K562 (cell line): ENCODE measurements at regions of chr3 and their contacts with region 1.

Region 1: DNA sequence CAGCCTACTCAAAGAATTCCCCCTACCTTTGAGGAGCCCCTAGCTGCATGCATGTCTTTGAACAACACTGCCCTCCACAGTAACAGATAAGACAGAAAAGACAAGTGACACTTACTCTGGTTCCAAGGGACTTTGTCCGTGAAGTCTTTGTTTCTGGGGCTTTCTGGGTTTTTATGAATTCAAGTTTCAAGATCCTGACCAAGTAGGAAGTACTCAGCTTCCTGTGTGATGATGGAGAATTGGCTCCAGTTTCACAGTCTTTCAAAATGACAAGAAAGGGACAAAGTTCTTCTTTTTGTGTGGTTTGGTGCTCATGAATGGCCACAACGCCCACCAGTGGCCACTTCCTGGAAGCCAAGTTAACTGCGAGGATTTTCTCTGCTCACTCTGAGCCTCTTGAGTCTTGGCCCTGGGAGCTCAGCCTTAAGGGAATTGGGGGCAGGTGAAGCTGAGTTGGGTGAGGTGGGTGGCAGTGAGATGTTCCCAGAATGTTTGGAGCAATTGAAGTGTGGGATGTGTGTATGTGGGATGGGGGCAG is at the start of gene CCR1:
- DNase-seq: peak in 2 of 4 experiments; percentile 27 to 41
- ATAC-seq: peak; percentile 89
- H3K4me3 ChIP-seq: no peak within 1 kb of the TSS
- H3K27ac ChIP-seq: no peak within 1 kb of the TSS
- H3K4me1 ChIP-seq: no peaks in the 10 kb centered on the region
- H3K27me3 ChIP-seq: peaks cover 0 to 13% of the 10 kb centered on the region in 2 experiments; a peak in 3 of 5 replicates
- CTCF ChIP-seq: peak; percentile 73 to 81 (median 76)
- EP300 ChIP-seq: no peak
- POLR2A ChIP-seq: no peak
- RAD21 ChIP-seq: peak; percentile 73 to 75
- polyA plus RNA-seq, gene CCR1: not detected

Region 2: GRCh38 chr3:46089237-46090011 is 118.8 kb before region 1 on chr3:
- CTCF ChIA-PET with region 1: interaction called, 11 read pairs
- POLR2A ChIA-PET with region 1: no interaction called
- in situ Hi-C with region 1: no loop called
- intact Hi-C with region 1: loop called (anchors 10 kb)
- DNase-seq: no peak
- ATAC-seq: no peak; the same call in 2 of the 3 replicates
- H3K4me3 ChIP-seq: no peak overlapping the region
- H3K27ac ChIP-seq: no peak overlapping the region
- H3K4me1 ChIP-seq: no peaks in the 10 kb centered on the region; a peak in 1 of 5 replicates
- H3K27me3 ChIP-seq: peaks cover 0 to 13% of the 10 kb centered on the region in 2 experiments; a peak in 3 of 5 replicates
- CTCF ChIP-seq: no peak
- EP300 ChIP-seq: no peak
- POLR2A ChIP-seq: no peak
- RAD21 ChIP-seq: no peak

Region 3: DNA sequence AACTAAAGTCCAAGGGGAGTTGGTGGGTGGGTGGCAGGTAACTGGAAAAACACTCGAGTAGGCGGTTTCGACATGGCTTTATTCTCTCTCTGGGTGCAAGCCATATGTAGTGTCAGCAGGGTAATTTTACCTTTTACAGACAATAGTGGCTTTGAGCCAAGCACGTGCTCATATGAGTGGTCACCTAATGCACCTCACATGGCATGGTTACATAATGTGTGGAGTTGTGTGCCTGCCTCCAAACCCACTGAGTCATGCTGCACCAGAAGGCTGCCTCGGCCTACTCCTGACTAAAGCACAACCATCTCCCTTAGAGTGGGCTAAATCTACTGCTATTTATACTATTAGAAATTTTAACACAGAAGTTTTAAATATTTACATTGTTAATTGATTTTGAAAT is 215.4 kb after region 1 on chr3:
- CTCF ChIA-PET with region 1: no interaction called
- POLR2A ChIA-PET with region 1: no interaction called
- in situ Hi-C with region 1: no loop called
- intact Hi-C with region 1: no loop called
- DNase-seq: no peak
- ATAC-seq: no peak
- H3K4me3 ChIP-seq: no peak overlapping the region
- H3K27ac ChIP-seq: no peak overlapping the region
- H3K4me1 ChIP-seq: peaks cover 3 to 18% of the 10 kb centered on the region in 2 experiments; a peak in 4 of 5 replicates
- H3K27me3 ChIP-seq: peaks cover 0 to 4% of the 10 kb centered on the region in 2 experiments; a peak in 2 of 5 replicates
- CTCF ChIP-seq: no peak
- EP300 ChIP-seq: no peak
- POLR2A ChIP-seq: no peak
- RAD21 ChIP-seq: no peak